Psoas muscle (tissue), 8 donors: ENCODE measurements at regions of chr10 and their contacts with region 1.

Region 1: DNA sequence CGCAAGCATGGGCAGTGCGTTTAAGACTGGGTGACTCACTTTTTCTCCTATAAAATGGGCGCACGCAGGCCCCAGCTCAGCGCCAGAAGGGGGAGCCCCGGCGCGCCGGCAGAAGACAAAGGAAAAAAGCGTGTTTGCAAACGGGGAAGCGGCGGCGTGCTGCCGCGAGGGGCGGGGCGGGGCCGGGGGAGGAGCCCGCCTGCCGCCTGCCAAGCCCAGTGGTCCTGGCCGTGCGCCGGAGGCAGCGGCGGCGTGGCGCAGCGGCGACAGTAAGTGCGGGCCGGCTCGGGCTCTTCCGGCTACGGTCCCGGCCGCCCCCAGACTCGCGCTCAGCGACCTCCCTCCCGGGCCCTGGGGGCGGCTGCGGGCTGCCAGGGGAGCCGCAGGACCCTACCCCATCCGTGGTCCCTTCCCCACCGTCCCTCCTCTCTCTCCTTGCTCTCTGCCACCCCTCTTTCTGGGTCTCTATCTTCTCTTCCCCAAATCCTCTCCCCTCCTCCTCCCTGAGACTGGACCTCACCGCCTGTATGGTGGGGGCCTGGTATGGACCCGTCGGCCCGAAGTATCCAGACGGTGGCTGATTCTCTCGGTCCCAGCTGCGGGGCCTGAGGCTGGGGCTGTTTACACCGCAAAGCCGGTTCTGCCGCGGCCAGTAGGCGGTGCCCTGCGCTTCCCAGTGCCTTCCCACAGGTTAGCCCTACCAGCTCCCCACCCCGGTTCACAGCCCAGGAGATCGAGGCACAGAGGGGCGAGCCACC is at the start of gene SLC29A3:
- DNase-seq: peak; percentile 86 to 89
- ATAC-seq: peak; percentile 88 to 95 (median 92)
- H3K4me3 ChIP-seq: peak within 1 kb of the TSS; percentile 73
- H3K27ac ChIP-seq: peak within 1 kb of the TSS; percentile 70
- H3K4me1 ChIP-seq: peaks cover 10% of the 10 kb centered on the region
- H3K27me3 ChIP-seq: no peaks in the 10 kb centered on the region
- CTCF ChIP-seq: peak; percentile 51
- total RNA-seq, gene SLC29A3: 0.64 to 2.2 (median 1.3) TPM

Region 2: DNA sequence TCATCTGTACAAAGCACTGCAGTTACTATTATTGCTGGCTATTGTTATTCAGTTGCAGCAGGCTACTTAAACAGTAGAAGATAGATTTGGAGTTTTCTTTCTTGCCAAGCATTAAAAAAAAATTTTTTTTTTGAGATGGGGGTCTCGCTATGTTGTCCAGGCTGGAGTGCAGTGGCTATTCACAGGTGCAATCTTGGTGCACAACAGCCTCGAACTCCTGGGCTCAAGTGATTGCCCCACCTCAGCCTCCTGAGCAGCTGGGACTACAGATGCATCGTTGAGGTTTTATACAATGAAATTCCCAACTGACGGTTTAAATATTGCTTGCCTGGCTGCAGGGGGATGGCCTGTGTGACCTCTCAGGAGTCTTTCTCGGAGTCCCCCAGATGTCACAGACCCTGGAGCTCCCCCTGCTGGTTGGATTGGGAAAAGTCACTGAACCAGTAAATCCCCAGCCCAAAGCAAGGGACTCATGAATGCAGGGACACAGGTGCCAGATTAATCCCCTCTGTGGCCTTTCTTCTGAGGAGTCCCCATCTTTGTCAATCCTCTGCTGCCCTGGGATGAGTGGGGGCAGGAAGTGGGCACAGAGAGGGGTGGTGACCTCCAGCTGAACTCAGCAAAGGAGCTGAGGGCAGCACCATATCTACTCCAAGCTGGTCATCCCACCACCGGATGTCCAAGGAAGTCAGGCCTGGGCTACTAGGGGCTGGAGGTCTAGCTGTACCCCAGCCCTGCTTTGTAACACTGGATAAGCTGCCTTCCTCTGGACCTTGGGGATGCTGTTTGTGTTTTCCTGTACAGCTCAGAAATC is 250.8 kb after region 1 on chr10:
- intact Hi-C with region 1: loop called (anchors 2 to 5 kb)
- DNase-seq: peak; percentile 69 to 79
- ATAC-seq: peak; percentile 60 to 76 (median 66)
- H3K4me3 ChIP-seq: no peak overlapping the region
- H3K27ac ChIP-seq: no peak overlapping the region
- H3K4me1 ChIP-seq: peaks cover 1% of the 10 kb centered on the region
- H3K27me3 ChIP-seq: no peaks in the 10 kb centered on the region
- CTCF ChIP-seq: peak; percentile 83

Region 3: GRCh38 chr10:71696628-71697326 is 377.6 kb after region 1 on chr10:
- intact Hi-C with region 1: loop called in 1 of 2 experiments (anchors 5 kb)
- DNase-seq: peak; percentile 64 to 82
- ATAC-seq: peak; percentile 72 to 78 (median 73)
- H3K4me3 ChIP-seq: no peak overlapping the region
- H3K27ac ChIP-seq: no peak overlapping the region
- H3K4me1 ChIP-seq: peaks cover 11% of the 10 kb centered on the region
- H3K27me3 ChIP-seq: peaks cover 0 to 2% (median 0%) of the 10 kb centered on the region in 3 donors
- CTCF ChIP-seq: peak; percentile 86

Region 4: DNA sequence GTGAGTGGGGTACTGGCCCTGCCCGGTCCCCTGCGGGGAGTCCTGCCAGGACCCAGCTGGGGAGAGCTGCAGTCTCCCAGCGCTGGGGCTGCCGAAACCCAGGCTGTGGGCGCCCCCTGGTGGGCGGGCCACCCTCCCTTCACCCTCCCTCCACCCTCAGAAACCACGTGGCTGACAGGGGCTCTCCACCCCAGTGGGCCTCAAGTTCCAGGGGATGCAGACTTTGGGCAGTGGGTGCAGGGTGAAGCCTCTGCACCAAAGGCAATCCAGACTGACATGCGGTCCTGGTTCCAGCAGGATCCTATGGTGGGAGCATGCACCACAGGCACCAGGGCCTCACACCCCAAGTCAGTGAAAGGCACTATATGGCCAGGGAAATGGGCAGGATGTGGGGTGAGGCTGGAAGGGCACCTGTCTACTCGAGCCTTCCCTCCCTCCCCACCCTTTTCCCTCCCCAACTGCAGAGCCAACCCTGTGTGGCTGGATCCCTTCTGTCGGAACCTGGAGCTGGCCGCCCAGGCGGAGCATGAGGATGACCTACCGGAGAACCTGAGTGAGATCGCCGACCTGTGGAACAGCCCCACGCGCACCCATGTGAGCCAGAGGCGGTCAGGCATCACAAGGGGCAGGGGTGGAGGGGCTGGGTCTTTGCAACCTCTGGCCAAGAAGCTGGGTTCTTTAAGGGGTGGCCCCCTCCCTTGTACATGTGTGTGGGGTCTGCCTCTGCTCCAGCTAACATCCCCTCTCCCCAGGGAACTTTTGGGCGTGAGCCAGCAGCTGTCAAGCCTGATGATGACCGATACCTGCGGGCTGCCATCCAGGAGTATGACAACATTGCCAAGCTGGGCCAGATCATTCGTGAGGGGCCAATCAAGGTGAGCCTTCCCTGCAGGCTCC is 493.0 kb after region 1 on chr10:
- intact Hi-C with region 1: loop called (anchors 2 to 5 kb)
- DNase-seq: peak; percentile 72 to 87
- ATAC-seq: peak; percentile 66 to 83 (median 75)
- H3K4me3 ChIP-seq: no peak overlapping the region
- H3K27ac ChIP-seq: no peak overlapping the region
- H3K4me1 ChIP-seq: peaks cover 7% of the 10 kb centered on the region
- H3K27me3 ChIP-seq: no peaks in the 10 kb centered on the region
- CTCF ChIP-seq: peak; percentile 79